ENCODE measurements at regions of chr14 and their contacts with region 1.

Region 1: DNA sequence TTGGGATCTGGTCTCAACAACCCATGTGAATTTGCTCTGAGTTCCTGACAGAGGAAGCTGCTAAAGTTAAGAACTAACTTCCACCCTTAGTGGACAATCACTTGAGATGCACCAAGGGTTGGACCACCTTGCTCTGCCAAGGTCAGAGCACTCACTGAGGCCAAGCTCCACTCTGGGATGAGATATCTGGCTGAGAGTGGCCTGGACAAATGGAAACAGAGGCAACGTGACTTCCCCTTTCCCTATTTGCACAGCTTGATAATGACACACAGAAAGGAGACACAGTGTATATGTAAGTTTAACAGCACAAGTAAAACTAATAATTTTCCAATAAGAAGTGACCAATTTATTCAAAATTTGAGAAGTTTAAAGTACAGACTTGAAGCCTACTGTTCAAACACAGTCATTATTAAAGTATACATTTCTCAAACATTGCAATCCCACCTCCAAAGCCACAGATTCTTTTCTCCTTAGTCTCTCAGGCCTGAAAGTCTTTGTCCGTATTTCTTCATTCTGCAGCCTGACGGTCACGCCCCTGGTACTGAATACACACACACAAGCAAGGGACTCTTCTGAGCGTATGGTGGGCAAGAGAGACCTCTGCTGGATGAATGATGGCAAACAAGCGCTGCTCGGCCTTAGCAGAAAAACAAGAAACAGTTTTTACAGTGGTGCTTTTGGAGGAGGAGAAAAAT is 28.6 kb downstream of the TMEM30B start:
- DNase-seq: peak; percentile 74
- ATAC-seq: peak; percentile 96

Region 2: GRCh38 chr14:60349663-60350365 is 902.7 kb before region 1 on chr14:
- intact Hi-C with region 1: loop called (anchors 10 kb)
- DNase-seq: no peak
- ATAC-seq: peak; percentile 54

Region 3: GRCh38 chr14:60622917-60623257 is 629.6 kb before region 1 on chr14:
- intact Hi-C with region 1: loop called (anchors 1 kb)
- DNase-seq: no peak
- ATAC-seq: no peak

Region 4: GRCh38 chr14:60768602-60769001 is 483.9 kb before region 1 on chr14:
- intact Hi-C with region 1: no loop called
- DNase-seq: no peak
- ATAC-seq: no peak

Region 5: GRCh38 chr14:61025251-61026223 is 227.0 kb before region 1 on chr14:
- intact Hi-C with region 1: loop called (anchors 2 kb)
- DNase-seq: no peak
- ATAC-seq: no peak

Region 6: DNA sequence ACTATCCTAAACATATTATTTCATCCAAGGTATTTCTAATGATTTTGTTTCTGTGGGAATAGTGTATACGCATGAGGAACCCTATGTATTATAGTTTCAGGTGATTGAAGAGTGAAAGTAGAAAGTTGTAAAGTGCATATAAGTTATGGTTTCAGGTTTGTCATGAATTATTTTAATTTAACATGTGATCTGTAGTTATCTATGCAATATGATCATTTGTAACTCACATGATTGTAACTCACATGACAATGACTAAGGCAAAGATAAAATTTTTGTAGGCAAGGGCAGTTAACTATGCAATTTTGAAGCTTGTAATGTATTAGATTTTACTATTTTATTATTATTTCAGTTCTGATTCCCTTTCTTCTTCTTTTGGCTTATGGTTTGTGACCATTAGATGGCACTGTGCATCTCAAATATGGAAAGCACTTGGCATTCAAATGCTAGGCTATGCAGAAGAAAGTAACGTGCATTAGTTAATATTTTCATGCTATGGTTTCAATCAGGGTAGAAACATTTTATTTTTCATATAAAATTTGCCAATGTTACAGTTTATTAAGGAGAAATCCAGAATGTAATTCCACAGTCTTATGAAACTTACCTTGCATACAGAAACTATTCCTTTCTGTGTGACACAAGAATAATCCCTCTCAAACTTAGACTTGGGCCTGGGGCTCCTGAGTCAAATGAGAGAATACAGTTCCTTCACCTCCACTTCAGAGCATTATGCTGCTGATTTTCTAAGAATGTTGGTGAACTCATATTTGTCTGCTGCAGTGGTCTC is 44.4 kb after region 1 on chr14:
- intact Hi-C with region 1: no loop called
- DNase-seq: no peak
- ATAC-seq: no peak